ENCODE measurements at regions of chr17 and their contacts with region 1.

Region 1: DNA sequence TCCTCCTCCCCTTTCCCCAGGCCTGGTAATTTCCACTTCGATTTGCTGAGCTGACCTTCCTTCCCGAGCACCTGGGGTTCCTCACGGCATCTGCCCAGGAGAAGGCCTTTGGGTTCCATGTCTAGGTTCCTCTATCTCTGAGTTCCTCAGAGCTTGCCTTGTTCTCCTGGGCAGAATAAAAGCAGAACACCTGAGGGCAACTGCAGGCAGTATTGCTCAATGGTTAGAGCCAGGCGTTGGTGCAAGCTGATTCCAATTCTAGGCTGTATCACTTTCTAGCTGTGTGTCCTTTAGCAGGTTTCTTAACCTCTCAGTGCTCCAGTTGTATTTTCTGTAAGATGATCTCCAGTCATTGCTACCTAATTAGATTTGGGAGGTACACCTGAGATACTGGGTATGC is 82.8 kb downstream of the SPACA3 start:
- DNase-seq: no peak
- H3K4me3 ChIP-seq: no peak overlapping the region
- H3K4me3 Mint-ChIP-seq: no peak overlapping the region
- H3K27ac Mint-ChIP-seq: no peak overlapping the region
- H3K4me1 ChIP-seq: no peaks in the 10 kb centered on the region
- H3K4me1 Mint-ChIP-seq: no peaks in the 10 kb centered on the region
- H3K27me3 ChIP-seq: peaks cover 1% of the 10 kb centered on the region
- H3K27me3 Mint-ChIP-seq: peaks cover 38% of the 10 kb centered on the region
- CTCF ChIP-seq: no peak

Region 2: GRCh38 chr17:32962320-32962711 is 112.1 kb before region 1 on chr17:
- CTCF ChIA-PET with region 1: no interaction called
- POLR2A ChIA-PET with region 1: interaction called, 11 read pairs
- intact Hi-C with region 1: no loop called
- DNase-seq: peak; percentile 50 to 56
- H3K4me3 ChIP-seq: no peak overlapping the region
- H3K4me3 Mint-ChIP-seq: peak overlapping the region; percentile 29
- H3K27ac Mint-ChIP-seq: peak overlapping the region; percentile 61
- H3K4me1 ChIP-seq: peaks cover 47% of the 10 kb centered on the region
- H3K4me1 Mint-ChIP-seq: peaks cover 65% of the 10 kb centered on the region
- H3K27me3 ChIP-seq: no peaks in the 10 kb centered on the region
- H3K27me3 Mint-ChIP-seq: no peaks in the 10 kb centered on the region
- CTCF ChIP-seq: no peak

Region 3: DNA sequence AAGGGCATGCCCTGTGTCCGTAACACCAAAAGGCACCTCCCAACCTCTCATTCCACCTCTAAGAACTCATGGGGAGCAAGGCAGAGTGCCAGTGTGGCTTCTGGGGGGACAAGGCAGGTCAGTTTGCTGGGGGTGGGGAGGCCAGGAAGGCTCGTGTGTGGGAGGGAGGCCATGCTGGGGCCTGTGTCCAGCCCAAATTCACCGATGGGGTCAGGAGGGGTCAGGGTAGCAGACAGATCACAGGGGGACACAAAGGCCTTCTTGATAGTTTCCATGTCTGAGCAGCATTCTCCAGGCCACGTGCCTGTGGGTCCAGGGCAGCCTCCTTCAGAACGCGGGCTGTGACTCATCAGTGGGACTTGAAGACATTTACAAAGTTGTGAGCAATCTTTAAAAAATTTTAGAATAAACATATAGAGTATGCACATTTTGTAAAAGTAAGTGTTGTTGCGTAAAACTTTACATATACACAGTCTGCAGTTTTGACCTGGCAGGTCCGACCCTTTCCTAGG is 61.8 kb before region 1 on chr17:
- CTCF ChIA-PET with region 1: no interaction called
- POLR2A ChIA-PET with region 1: no interaction called
- intact Hi-C with region 1: no loop called
- DNase-seq: peak in 1 of 2 experiments; percentile 61
- H3K4me3 ChIP-seq: no peak overlapping the region
- H3K4me3 Mint-ChIP-seq: no peak overlapping the region
- H3K27ac Mint-ChIP-seq: no peak overlapping the region
- H3K4me1 ChIP-seq: peaks cover 15% of the 10 kb centered on the region
- H3K4me1 Mint-ChIP-seq: peaks cover 18% of the 10 kb centered on the region
- H3K27me3 ChIP-seq: no peaks in the 10 kb centered on the region
- H3K27me3 Mint-ChIP-seq: no peaks in the 10 kb centered on the region
- CTCF ChIP-seq: no peak